Sciatic nerve (tissue), 2 donors: ENCODE measurements at regions of chr4 and their contacts with region 1.

Region 1: GRCh38 chr4:124079174-124079780 is 633.3 kb downstream of the ANKRD50 start:
- DNase-seq: no peak
- ATAC-seq: no peak

Region 2: DNA sequence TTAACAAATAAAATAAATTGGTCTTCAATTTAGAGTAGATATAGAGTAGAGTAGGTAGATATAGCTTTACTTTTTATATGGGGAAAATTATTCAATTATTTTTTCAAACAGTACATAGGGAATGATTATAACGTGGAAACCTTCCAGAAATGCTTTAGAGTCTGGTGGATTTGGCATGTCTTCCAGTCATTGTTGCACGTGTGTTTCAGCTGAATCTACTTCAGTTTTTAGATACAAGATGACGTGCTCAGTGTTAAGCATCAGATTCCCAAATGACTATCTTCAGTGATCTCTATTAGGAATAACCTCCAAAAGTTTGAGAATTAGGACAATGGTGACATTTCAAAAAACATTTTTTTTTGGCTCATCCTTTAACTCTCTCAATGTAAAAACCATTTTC is 16.3 kb after region 1 on chr4:
- intact Hi-C with region 1: loop called (anchors 1 kb)
- DNase-seq: no peak
- ATAC-seq: no peak

Region 3: GRCh38 chr4:124177647-124178425 is 98.6 kb after region 1 on chr4:
- intact Hi-C with region 1: no loop called
- DNase-seq: no peak
- ATAC-seq: no peak

Region 4: DNA sequence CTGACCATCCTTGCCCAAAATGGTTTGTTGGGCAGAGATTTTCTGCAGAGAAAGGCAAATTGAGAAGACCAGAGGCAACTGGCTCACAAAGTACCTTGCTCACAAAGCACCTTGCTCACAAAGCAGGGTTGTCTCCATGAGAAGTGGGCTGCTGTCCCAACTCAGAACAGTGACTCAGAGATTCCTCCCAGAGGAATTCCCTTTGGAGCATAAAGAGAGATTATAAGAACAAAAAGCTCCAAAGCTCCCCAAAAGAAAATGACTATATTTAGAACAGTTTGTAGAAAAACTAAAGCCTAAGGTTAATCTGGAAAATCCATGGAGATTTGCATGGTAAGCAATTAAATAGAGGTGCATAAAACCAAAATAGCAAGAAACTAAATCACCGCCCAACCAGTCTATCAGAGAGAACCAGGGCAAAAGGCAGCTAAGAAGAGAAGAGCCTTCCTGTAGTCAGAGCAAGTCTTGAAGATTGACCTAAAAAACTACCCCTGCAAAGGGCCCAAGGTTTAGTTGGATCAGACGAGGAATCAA is 1966.9 kb after region 1 on chr4:
- intact Hi-C with region 1: no loop called
- DNase-seq: no peak
- ATAC-seq: no peak